Endothelial cell of umbilical vein (primary cell): ENCODE measurements at regions of chrX and their contacts with region 1.

Region 1: GRCh38 chrX:149950681-149951080 is 12.4 kb upstream of the EOLA2 start:
- DNase-seq: peak; percentile 62
- H3K4me3 ChIP-seq: no peak overlapping the region
- H3K27ac ChIP-seq: no peak overlapping the region
- H3K4me1 ChIP-seq: no peaks in the 10 kb centered on the region
- H3K27me3 ChIP-seq: no peaks in the 10 kb centered on the region
- CTCF ChIP-seq: peak; percentile 22 to 25
- POLR2A ChIP-seq: no peak

Region 2: GRCh38 chrX:149504915-149505651 is 445.6 kb before region 1 on chrX and contains the start of gene IDS:
- CTCF ChIA-PET with region 1: no interaction called
- POLR2A ChIA-PET with region 1: no interaction called
- dilution Hi-C with region 1: no loop called
- intact Hi-C with region 1: no loop called
- DNase-seq: peak; percentile 83
- H3K4me3 ChIP-seq: peak within 1 kb of the TSS in 2 of 3 experiments; percentile 41 to 63
- H3K27ac ChIP-seq: peak within 1 kb of the TSS; percentile 44
- H3K4me1 ChIP-seq: peaks cover 17% of the 10 kb centered on the region
- H3K27me3 ChIP-seq: peaks cover 0 to 2% of the 10 kb centered on the region in 2 experiments
- CTCF ChIP-seq: no peak
- POLR2A ChIP-seq: peak; percentile 91
- total RNA-seq, gene IDS: 35.2 and 42.2 TPM in 2 replicates

Region 3: DNA sequence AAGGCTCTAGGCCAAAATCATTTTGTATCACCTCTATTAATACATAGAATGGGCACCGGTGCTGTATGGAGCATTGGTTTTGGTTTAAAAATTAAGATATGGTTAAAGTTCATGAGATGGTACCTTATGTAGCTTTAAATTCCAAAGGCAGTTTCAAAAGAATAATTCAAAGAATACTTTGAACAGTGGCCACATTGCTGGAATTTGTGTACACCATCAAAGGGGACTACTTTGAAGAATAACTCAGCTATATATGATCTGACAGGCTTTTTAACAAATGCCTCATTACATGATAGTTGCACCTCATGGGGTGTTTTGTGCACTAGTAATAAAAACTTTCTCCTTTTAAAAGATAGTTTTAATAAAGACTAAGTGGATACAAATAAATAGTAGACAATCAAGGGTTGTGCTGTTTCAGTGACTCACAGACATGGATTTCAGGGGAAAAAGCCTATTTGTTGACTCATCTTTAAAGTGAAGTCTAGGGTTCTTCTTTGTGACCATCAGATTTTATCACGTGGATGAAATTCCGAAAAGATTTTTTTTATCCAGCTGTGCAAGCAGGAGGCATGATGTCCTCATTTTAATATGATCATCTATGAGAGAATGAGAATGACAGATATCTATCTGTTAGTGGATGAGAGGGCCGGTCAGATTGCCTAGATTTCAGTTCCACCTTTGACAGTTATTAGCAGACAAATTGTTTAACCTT is 630.6 kb after region 1 on chrX:
- CTCF ChIA-PET with region 1: interaction called, 6 read pairs
- POLR2A ChIA-PET with region 1: no interaction called
- dilution Hi-C with region 1: no loop called
- intact Hi-C with region 1: loop called (anchors 5 kb)
- DNase-seq: peak; percentile 11
- H3K4me3 ChIP-seq: no peak overlapping the region
- H3K27ac ChIP-seq: no peak overlapping the region
- H3K4me1 ChIP-seq: peaks cover 11% of the 10 kb centered on the region
- H3K27me3 ChIP-seq: no peaks in the 10 kb centered on the region
- CTCF ChIP-seq: no peak
- POLR2A ChIP-seq: no peak

Region 4: GRCh38 chrX:150683536-150684146 is 733.0 kb after region 1 on chrX:
- CTCF ChIA-PET with region 1: interaction called, 12 read pairs
- POLR2A ChIA-PET with region 1: no interaction called
- dilution Hi-C with region 1: no loop called
- intact Hi-C with region 1: no loop called
- DNase-seq: peak; percentile 31
- H3K4me3 ChIP-seq: no peak overlapping the region
- H3K27ac ChIP-seq: no peak overlapping the region
- H3K4me1 ChIP-seq: peaks cover 3% of the 10 kb centered on the region
- H3K27me3 ChIP-seq: no peaks in the 10 kb centered on the region
- CTCF ChIP-seq: peak; percentile 27 to 42
- POLR2A ChIP-seq: no peak

Region 5: GRCh38 chrX:151722241-151722846 is 1771.7 kb after region 1 on chrX:
- CTCF ChIA-PET with region 1: no interaction called
- POLR2A ChIA-PET with region 1: no interaction called
- dilution Hi-C with region 1: no loop called
- intact Hi-C with region 1: no loop called
- DNase-seq: no peak
- H3K4me3 ChIP-seq: no peak overlapping the region
- H3K27ac ChIP-seq: no peak overlapping the region
- H3K4me1 ChIP-seq: no peaks in the 10 kb centered on the region
- H3K27me3 ChIP-seq: no peaks in the 10 kb centered on the region
- CTCF ChIP-seq: peak in 1 of 2 donors; percentile 38
- POLR2A ChIP-seq: no peak